Caco-2 (cell line): ENCODE measurements at regions of chr20 and their contacts with region 1.

Region 1: GRCh38 chr20:14337400-14338171 is at the start of gene FLRT3:
- DNase-seq: peak; percentile 94 to 97
- H3K4me3 ChIP-seq: peak within 1 kb of the TSS; percentile 54
- H3K4me3 Mint-ChIP-seq: peak within 1 kb of the TSS; percentile 77
- H3K27ac Mint-ChIP-seq: peak within 1 kb of the TSS; percentile 48
- H3K4me1 ChIP-seq: peaks cover 40% of the 10 kb centered on the region
- H3K4me1 Mint-ChIP-seq: peaks cover 27% of the 10 kb centered on the region
- H3K27me3 ChIP-seq: no peaks in the 10 kb centered on the region
- H3K27me3 Mint-ChIP-seq: no peaks in the 10 kb centered on the region
- CTCF ChIP-seq: peak; percentile 81 to 82
- total RNA-seq, gene FLRT3: 98.2 and 107 TPM in 2 replicates

Region 2: DNA sequence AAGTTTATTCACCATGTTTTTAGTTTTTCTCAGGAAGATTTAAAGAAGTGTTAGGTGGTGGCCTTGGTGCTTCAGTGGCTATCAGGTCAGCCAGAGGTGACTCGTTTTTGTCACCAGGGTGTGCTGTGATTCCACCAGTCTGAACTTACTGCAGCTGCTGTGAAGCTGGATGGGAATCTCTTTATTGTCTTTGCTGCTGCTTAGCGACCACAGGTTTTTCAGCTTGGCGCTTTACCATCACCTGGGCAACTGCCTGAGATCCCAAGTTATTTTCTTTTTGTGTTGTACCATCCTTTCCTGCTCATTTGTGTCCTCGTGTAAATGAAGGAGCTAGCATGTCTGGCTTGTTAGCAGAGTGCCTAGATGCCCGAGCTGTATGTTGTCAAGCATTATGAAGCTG is 195.4 kb before region 1 on chr20:
- CTCF ChIA-PET with region 1: interaction called, 21 read pairs
- POLR2A ChIA-PET with region 1: interaction called, 9 read pairs
- intact Hi-C with region 1: loop called (anchors 1 kb)
- DNase-seq: peak; percentile 84 to 87
- H3K4me3 ChIP-seq: no peak overlapping the region
- H3K4me3 Mint-ChIP-seq: peak overlapping the region; percentile 23
- H3K27ac Mint-ChIP-seq: no peak overlapping the region
- H3K4me1 ChIP-seq: peaks cover 28% of the 10 kb centered on the region
- H3K4me1 Mint-ChIP-seq: no peaks in the 10 kb centered on the region
- H3K27me3 ChIP-seq: no peaks in the 10 kb centered on the region
- H3K27me3 Mint-ChIP-seq: no peaks in the 10 kb centered on the region
- CTCF ChIP-seq: peak; percentile 77 to 82

Region 3: DNA sequence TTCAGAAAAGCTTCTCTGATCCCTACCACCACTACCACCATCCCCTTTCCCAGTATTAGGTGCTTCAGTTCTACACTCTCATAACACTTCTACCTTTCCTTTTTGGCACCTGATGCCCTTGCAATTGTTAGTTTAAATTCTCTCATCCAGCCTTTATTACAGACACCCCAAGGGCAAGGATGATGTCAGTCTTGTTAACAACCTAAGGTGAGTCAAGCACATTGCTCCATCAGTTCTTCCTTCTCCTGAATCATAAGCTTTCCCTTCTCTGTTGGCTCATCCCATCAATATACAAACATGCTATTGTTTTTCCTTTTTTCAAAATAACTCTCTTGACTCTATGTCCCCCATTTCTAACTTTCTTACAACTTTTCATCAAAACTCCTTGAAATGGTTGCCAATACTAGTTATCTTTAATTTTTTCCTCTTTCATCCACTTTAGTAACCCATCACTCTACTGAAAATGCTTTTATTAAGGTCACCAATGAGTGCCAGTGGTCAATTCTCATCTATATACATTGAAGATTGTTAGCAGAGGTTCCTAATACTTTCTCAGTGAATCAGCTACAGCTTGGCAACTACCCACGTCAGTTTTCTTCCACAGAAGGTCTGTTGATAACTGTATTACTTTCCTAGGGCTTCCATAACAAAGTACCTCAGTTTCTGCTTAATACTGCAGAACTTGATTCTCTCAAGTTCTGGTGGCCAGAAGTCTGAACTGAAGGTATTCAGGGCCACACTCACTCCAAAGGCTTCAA is 97.0 kb after region 1 on chr20:
- CTCF ChIA-PET with region 1: interaction called, 27 read pairs
- POLR2A ChIA-PET with region 1: interaction called, 16 read pairs
- intact Hi-C with region 1: loop called (anchors 1 kb)
- DNase-seq: no peak
- H3K4me3 ChIP-seq: no peak overlapping the region
- H3K4me3 Mint-ChIP-seq: no peak overlapping the region
- H3K27ac Mint-ChIP-seq: no peak overlapping the region
- H3K4me1 ChIP-seq: peaks cover 43% of the 10 kb centered on the region
- H3K4me1 Mint-ChIP-seq: peaks cover 21% of the 10 kb centered on the region
- H3K27me3 ChIP-seq: no peaks in the 10 kb centered on the region
- H3K27me3 Mint-ChIP-seq: no peaks in the 10 kb centered on the region
- CTCF ChIP-seq: no peak

Region 4: GRCh38 chr20:14544688-14545087 is 207.1 kb after region 1 on chr20:
- CTCF ChIA-PET with region 1: no interaction called
- POLR2A ChIA-PET with region 1: no interaction called
- intact Hi-C with region 1: no loop called
- DNase-seq: no peak
- H3K4me3 ChIP-seq: no peak overlapping the region
- H3K4me3 Mint-ChIP-seq: no peak overlapping the region
- H3K27ac Mint-ChIP-seq: no peak overlapping the region
- H3K4me1 ChIP-seq: no peaks in the 10 kb centered on the region
- H3K4me1 Mint-ChIP-seq: no peaks in the 10 kb centered on the region
- H3K27me3 ChIP-seq: no peaks in the 10 kb centered on the region
- H3K27me3 Mint-ChIP-seq: no peaks in the 10 kb centered on the region
- CTCF ChIP-seq: no peak

Region 5: GRCh38 chr20:14672066-14672465 is 334.5 kb after region 1 on chr20:
- CTCF ChIA-PET with region 1: interaction called, 6 read pairs
- POLR2A ChIA-PET with region 1: interaction called, 4 read pairs
- intact Hi-C with region 1: loop called (anchors 2 kb)
- DNase-seq: no peak
- H3K4me3 ChIP-seq: no peak overlapping the region
- H3K4me3 Mint-ChIP-seq: no peak overlapping the region
- H3K27ac Mint-ChIP-seq: no peak overlapping the region
- H3K4me1 ChIP-seq: peaks cover 36% of the 10 kb centered on the region
- H3K4me1 Mint-ChIP-seq: peaks cover 10% of the 10 kb centered on the region
- H3K27me3 ChIP-seq: no peaks in the 10 kb centered on the region
- H3K27me3 Mint-ChIP-seq: no peaks in the 10 kb centered on the region
- CTCF ChIP-seq: no peak

Region 6: DNA sequence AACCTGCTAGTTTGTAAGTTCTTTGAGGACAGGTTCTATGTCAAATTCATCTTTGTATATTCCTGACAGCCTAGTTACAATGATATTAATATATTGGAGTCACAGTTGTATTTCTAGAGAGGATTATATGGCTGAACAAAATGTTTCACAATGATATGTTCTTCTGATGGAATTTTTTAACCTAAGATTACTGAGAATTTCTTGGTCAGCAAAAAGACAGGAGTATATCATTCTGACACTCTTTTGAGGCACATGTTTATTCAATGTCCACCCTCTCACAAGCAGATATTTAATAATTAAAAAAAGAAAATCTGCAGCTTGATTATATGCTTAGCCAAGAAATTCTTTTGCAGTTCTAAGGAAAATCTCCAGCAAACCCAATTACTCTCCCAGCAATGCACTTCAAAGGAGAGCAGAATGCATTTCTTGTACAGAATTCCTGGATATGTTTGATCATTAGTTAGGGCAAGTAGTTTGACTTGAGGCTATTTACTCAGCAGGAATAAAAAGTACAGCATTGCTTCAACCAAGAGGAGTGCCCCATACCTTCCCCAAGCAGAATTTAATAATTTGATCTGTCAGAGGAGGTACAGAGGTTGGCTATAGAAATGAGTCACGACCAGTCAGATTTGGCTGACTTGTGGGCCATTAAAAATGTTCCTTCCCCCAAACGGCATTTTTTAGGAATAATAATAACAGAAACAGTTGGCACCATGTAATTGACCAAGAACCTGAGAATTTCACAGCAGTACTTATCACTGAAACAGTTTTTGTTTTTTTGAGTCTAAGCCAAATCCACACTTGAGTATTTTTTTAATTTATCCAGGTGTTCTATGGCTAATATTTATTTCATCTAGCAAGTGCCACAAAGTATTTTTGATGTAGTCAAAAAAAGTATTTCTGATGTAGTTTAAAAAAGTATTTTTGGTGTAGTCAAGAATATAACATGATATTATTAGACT is 507.9 kb after region 1 on chr20:
- CTCF ChIA-PET with region 1: no interaction called
- POLR2A ChIA-PET with region 1: no interaction called
- intact Hi-C with region 1: loop called (anchors 5 kb)
- DNase-seq: peak in 1 of 2 experiments; percentile 30
- H3K4me3 ChIP-seq: no peak overlapping the region
- H3K4me3 Mint-ChIP-seq: no peak overlapping the region
- H3K27ac Mint-ChIP-seq: no peak overlapping the region
- H3K4me1 ChIP-seq: peaks cover 14% of the 10 kb centered on the region
- H3K4me1 Mint-ChIP-seq: peaks cover 8% of the 10 kb centered on the region
- H3K27me3 ChIP-seq: no peaks in the 10 kb centered on the region
- H3K27me3 Mint-ChIP-seq: no peaks in the 10 kb centered on the region
- CTCF ChIP-seq: no peak

Region 7: DNA sequence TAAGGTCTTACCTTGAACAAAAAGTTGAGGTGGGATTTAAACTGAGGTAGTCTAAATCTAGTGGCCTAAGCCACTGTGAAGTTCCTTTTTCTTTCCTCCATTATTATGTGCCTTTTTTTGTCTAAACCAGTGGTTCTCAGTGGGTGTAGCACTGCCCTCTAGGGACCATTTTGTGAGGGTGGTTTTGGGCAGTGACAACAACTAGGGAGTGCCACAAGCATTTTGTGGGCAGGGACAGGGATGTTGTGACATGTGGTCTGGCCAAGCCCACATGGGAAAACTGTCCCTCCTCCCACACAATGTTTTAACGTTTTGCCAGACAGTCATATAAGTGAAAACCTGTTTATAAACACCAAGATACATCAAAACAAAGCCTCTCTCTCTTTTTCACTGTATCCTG is 899.2 kb after region 1 on chr20:
- CTCF ChIA-PET with region 1: interaction called, 4 read pairs
- POLR2A ChIA-PET with region 1: no interaction called
- intact Hi-C with region 1: loop called (anchors 1 kb)
- DNase-seq: peak; percentile 57 to 64
- H3K4me3 ChIP-seq: no peak overlapping the region
- H3K4me3 Mint-ChIP-seq: no peak overlapping the region
- H3K27ac Mint-ChIP-seq: no peak overlapping the region
- H3K4me1 ChIP-seq: no peaks in the 10 kb centered on the region
- H3K4me1 Mint-ChIP-seq: peaks cover 7% of the 10 kb centered on the region
- H3K27me3 ChIP-seq: no peaks in the 10 kb centered on the region
- H3K27me3 Mint-ChIP-seq: no peaks in the 10 kb centered on the region
- CTCF ChIP-seq: peak; percentile 42 to 51

Region 8: GRCh38 chr20:15930311-15931305 is 1593.0 kb after region 1 on chr20:
- CTCF ChIA-PET with region 1: no interaction called
- POLR2A ChIA-PET with region 1: no interaction called
- intact Hi-C with region 1: loop called (anchors 10 kb)
- DNase-seq: peak in 1 of 2 experiments; percentile 43
- H3K4me3 ChIP-seq: no peak overlapping the region
- H3K4me3 Mint-ChIP-seq: no peak overlapping the region
- H3K27ac Mint-ChIP-seq: no peak overlapping the region
- H3K4me1 ChIP-seq: no peaks in the 10 kb centered on the region
- H3K4me1 Mint-ChIP-seq: peaks cover 7% of the 10 kb centered on the region
- H3K27me3 ChIP-seq: no peaks in the 10 kb centered on the region
- H3K27me3 Mint-ChIP-seq: no peaks in the 10 kb centered on the region
- CTCF ChIP-seq: peak; percentile 53 to 67